Heart right ventricle (tissue), 16 donors: ENCODE measurements at regions of chr15 and their contacts with region 1.

Region 1: DNA sequence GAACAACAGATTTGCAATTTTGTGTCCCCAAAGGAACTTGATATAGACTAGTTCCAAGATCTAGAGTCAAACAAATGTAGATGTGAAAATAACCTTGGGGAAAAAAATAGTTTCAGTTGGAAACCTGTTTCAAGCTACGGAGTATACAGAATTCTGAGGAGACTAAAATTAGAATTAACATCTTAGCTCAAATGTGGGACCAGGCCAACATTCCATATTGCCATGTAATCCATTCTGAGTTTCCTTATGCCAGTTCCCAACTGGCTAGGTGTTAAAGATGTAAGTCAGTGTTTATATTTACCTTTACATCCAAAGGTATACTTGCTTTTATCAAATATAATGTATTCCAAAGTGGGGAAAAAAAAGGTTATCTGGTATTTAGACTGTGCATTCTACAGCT is 76.3 kb downstream of the UBE3A start:
- DNase-seq: no peak
- ATAC-seq: peak in 1 of 8 donors; percentile 60
- H3K4me3 ChIP-seq: no peak overlapping the region
- H3K27ac ChIP-seq: peak overlapping the region in 3 of 10 donors; percentile 22 to 49 (median 43)
- H3K4me1 ChIP-seq: peaks cover 0 to 21% (median 10%) of the 10 kb centered on the region in 9 donors
- H3K27me3 ChIP-seq: no peaks in the 10 kb centered on the region
- CTCF ChIP-seq: no peak

Region 2: DNA sequence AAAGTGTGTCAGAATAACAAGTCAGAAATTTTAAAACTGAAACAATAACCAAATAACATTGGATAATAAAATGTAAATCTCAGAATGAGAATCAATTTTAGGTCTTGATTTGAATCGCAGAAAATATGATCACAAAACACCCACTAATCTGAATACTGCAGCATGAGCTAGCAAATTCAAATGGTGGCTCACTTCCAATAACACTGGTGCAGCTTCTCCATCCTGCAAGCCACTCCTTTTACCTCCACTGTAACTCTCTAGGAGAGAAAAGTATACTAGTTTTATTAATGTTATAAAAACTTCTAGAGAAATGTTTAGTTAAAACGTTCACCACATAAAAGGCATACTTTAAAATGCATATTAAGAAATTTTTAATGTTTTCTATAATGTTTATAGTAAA is 45.9 kb after region 1 on chr15:
- intact Hi-C with region 1: loop called in 2 of 10 experiments (anchors 5 to 10 kb)
- DNase-seq: no peak
- ATAC-seq: peak in 3 of 8 donors; percentile 70 to 72 (median 70)
- H3K4me3 ChIP-seq: no peak overlapping the region
- H3K27ac ChIP-seq: peak overlapping the region in 1 of 10 donors; percentile 12
- H3K4me1 ChIP-seq: peaks cover 3 to 74% (median 51%) of the 10 kb centered on the region in 9 donors
- H3K27me3 ChIP-seq: no peaks in the 10 kb centered on the region
- CTCF ChIP-seq: no peak

Region 3: GRCh38 chr15:25439369-25439836 is 76.9 kb after region 1 on chr15:
- intact Hi-C with region 1: no loop called
- DNase-seq: no peak
- ATAC-seq: peak in 7 of 8 donors; percentile 3 to 47 (median 35)
- H3K4me3 ChIP-seq: peak overlapping the region; percentile 71 to 100 (median 94)
- H3K27ac ChIP-seq: peak overlapping the region; percentile 91 to 100 (median 99)
- H3K4me1 ChIP-seq: peaks cover 3 to 36% (median 24%) of the 10 kb centered on the region in 9 donors
- H3K27me3 ChIP-seq: no peaks in the 10 kb centered on the region
- CTCF ChIP-seq: no peak

Region 4: GRCh38 chr15:26013981-26014380 is 651.4 kb after region 1 on chr15:
- intact Hi-C with region 1: no loop called
- DNase-seq: no peak
- ATAC-seq: no peak
- H3K4me3 ChIP-seq: no peak overlapping the region
- H3K27ac ChIP-seq: no peak overlapping the region
- H3K4me1 ChIP-seq: no peaks in the 10 kb centered on the region
- H3K27me3 ChIP-seq: peaks cover 0 to 21% (median 3%) of the 10 kb centered on the region in 7 donors
- CTCF ChIP-seq: no peak